ENCODE measurements at regions of chr2 and their contacts with region 1.

Region 1: GRCh38 chr2:71545572-71546274 is 92.4 kb downstream of the DYSF start:
- DNase-seq: peak; percentile 73 to 74
- H3K4me3 ChIP-seq: no peak overlapping the region
- H3K27ac ChIP-seq: peak overlapping the region in 2 of 3 donors; percentile 47 to 57
- H3K4me1 ChIP-seq: peaks cover 0 to 3% of the 10 kb centered on the region in 2 donors
- H3K27me3 ChIP-seq: no peaks in the 10 kb centered on the region
- CTCF ChIP-seq: peak; percentile 51 to 91 (median 81)
- POLR2A ChIP-seq: no peak

Region 2: DNA sequence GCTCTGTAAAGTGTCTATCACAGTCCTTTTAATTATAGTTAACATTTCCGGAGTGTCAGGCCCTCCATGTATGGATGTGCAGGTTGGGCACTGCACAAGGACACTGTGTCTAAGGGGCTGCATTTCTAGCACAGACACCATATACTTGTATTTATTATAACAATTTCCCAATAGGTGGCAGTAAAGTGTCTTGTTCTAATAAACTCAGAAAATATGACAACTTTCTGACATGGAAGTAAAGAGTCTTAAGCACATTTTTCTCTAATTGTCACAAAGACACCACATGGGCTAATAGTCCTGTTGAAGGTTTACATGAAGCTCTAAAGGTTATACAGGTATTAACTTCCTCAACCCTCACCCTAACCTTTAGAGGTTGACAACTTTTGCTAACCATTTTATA is 64.2 kb after region 1 on chr2:
- intact Hi-C with region 1: loop called (anchors 5 kb)
- DNase-seq: no peak
- H3K4me3 ChIP-seq: no peak overlapping the region
- H3K27ac ChIP-seq: no peak overlapping the region
- H3K4me1 ChIP-seq: peaks cover 0 to 14% of the 10 kb centered on the region in 2 donors
- H3K27me3 ChIP-seq: no peaks in the 10 kb centered on the region
- CTCF ChIP-seq: peak in 5 of 6 experiments; percentile 14 to 46 (median 43)
- POLR2A ChIP-seq: no peak

Region 3: DNA sequence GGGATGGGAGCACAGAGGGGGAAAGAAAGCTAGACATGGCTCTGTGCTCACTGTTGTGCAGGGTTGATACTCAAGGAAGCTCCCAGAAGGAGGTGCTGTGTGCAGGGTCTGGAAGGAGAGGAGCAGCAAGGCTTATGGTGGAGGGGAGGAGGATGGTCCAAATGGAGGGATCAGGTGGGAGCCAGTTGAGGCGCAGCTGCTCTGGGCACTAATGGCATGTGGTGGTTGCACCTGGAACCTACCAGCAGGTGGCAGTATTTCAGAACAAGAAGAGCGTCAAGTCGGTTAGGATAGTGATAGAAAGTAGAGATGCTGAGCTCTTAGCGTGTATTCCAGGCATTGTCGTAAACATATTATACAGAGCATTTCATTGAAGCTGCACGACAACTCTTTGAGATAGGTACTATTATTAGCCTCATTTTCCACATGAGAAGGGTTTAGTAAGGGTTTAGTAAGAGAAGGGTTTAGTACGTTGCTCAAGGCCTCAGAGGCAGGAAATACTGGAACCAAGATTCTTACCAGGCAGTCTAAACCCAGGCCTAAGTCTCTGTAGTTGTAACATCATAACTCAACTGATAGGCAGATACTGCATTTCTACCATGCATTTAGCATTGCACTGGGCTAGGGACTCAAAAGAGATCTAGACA is 378.3 kb after region 1 on chr2:
- intact Hi-C with region 1: loop called (anchors 5 kb)
- DNase-seq: peak; percentile 74 to 75
- H3K4me3 ChIP-seq: no peak overlapping the region
- H3K27ac ChIP-seq: no peak overlapping the region
- H3K4me1 ChIP-seq: no peaks in the 10 kb centered on the region
- H3K27me3 ChIP-seq: no peaks in the 10 kb centered on the region
- CTCF ChIP-seq: peak; percentile 60 to 84 (median 79)
- POLR2A ChIP-seq: no peak

Region 4: DNA sequence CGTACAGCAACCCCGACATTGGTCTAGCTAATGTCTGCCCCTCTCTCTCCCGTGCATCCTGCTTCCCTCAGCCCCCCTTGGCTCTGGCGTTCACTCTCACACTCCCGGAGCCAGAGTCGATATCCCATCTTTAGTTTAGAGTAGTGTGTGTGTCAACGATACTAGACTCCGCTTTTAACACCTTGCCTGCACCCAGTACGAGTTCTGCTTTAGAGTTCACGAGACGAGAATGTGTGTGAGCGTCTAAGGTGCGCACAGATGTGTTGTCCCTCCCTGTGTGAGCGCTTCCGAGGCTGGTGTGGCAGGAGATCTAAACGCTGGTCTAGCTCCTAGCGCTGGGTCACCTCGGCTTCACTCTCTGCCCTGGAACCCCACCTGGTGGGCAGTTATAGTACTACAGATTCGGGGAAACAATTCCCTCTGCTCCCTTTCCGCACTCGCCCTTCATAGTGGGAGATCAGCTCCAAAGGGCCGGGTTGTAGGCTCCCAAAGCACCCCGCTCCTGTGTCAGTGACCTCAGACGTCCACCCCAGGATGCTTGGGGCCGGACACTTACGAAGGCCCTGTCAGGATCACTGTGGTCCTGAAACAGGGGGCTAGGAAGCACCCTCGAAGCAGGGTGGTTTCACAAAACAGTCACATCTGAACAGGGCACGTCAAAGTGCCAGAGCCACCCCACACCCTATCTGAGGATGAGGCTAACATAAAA is 604.6 kb after region 1 on chr2:
- intact Hi-C with region 1: loop called (anchors 2 kb)
- DNase-seq: peak; percentile 76 to 79
- H3K4me3 ChIP-seq: peak overlapping the region in 1 of 3 donors; percentile 56
- H3K27ac ChIP-seq: no peak overlapping the region
- H3K4me1 ChIP-seq: peaks cover 40 to 42% of the 10 kb centered on the region in 2 donors
- H3K27me3 ChIP-seq: peaks cover 30% of the 10 kb centered on the region
- CTCF ChIP-seq: peak; percentile 81 to 93 (median 88)
- POLR2A ChIP-seq: no peak

Region 5: GRCh38 chr2:72579591-72580180 is 1034.0 kb after region 1 on chr2:
- intact Hi-C with region 1: no loop called
- DNase-seq: no peak
- H3K4me3 ChIP-seq: no peak overlapping the region
- H3K27ac ChIP-seq: no peak overlapping the region
- H3K4me1 ChIP-seq: peaks cover 5 to 9% of the 10 kb centered on the region in 2 donors
- H3K27me3 ChIP-seq: no peaks in the 10 kb centered on the region
- CTCF ChIP-seq: peak; percentile 25 to 72 (median 58)
- POLR2A ChIP-seq: no peak